Ascending aorta (tissue), 2 donors: ENCODE measurements at regions of chr2 and their contacts with region 1.

Region 1: DNA sequence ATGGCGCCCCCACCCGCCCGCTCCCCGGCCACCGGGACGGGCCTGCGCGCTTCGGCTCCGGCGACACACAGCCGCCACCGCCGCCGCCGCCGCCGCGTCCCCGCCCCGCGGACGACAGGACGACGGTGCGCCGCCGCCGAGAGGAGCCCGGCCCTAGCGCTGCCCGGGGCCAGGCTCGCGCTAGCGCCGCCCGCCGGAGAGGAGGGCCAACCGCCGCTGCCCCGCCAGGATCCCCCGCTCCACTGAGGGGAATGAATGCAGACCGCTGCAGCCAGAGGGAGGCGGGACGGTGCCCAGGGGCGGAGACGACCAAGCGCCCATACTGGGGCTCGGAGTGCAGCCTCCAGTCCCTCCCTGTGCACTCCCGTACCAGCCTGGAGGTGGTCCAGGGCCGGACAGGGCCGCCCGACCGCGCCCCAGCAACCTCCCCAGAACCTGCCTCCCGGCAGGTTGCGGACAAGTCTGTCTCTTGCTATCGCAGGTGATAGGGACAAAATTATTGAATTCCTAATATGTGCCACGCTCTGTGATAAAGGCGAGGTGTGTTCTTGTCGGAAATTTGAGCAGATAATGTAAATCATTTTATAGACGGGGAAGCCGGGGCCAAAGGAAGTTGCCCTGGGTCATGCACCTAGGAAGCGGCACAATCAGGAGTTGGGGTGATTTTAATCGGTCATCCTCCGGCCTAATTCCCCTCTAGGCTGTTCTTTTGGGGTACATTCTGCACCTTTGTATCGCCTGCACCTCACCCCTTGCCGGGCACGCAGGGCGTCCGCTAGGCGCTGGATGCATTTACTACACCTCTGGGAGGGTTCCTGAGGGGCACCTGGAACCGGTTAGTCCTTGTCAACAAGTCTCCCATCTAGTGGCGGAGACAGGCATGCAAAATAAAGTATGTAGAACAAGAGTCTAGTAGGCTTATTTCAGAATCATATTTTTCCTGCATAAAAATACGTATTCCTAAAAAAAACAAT is at the start of gene TEX261:
- DNase-seq: peak; percentile 46 to 95
- H3K4me3 ChIP-seq: peak within 1 kb of the TSS; percentile 84 to 95
- H3K27ac ChIP-seq: peak within 1 kb of the TSS; percentile 84 to 92
- H3K4me1 ChIP-seq: peaks cover 2 to 17% of the 10 kb centered on the region in 2 donors
- H3K27me3 ChIP-seq: no peaks in the 10 kb centered on the region
- CTCF ChIP-seq: peak; percentile 56 to 73 (median 60)
- total RNA-seq, gene TEX261: 133 TPM

Region 2: DNA sequence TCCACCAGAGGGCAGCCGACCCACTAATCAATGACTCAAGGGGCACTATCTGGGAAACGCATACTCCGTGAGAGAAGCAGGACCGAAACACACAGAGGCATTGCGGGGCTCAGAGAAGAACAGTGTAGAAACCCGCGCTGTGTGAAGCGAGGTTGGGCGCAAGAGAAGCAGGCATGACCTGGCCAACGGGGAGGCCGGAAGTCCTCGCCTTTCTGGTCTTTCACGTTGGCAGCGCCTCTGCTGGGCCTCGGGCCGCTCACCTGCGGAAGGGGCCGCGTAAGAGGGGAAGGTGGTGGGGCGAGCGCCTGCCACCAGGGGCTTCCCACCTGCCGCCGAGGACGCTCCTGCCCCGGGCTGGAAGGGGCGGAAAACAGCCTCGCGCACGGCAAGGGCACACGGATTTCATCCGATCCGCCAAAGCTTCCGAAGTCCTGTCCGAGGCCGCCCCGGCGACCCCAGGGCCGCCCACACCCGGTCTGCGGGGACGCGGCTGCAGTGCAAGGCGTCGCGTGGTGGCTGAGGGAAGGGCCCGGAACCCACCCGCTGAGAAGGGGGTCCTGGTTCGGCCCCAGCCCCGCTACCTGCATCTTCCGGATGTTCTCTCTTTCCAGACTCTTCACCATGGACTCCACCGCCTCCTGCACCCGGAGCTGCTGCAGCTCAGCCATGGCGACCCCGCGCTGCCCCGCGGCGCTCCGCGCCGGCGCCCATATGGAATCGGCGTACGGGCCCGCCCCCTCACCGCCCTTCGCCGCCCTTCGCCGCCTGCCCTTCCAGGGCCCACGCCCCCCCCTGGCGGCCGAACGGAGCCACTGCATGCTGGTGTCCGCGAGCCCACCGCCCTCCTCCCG is 693.5 kb before region 1 on chr2 and contains the start of gene FAM136A:
- intact Hi-C with region 1: loop called (anchors 10 kb)
- DNase-seq: peak; percentile 16 to 90
- H3K4me3 ChIP-seq: peak within 1 kb of the TSS; percentile 66 to 84
- H3K27ac ChIP-seq: peak within 1 kb of the TSS; percentile 80
- H3K4me1 ChIP-seq: peaks cover 0 to 5% of the 10 kb centered on the region in 2 donors
- H3K27me3 ChIP-seq: no peaks in the 10 kb centered on the region
- CTCF ChIP-seq: peak; percentile 94 to 99 (median 97)
- total RNA-seq, gene FAM136A: 2.0 TPM

Region 3: DNA sequence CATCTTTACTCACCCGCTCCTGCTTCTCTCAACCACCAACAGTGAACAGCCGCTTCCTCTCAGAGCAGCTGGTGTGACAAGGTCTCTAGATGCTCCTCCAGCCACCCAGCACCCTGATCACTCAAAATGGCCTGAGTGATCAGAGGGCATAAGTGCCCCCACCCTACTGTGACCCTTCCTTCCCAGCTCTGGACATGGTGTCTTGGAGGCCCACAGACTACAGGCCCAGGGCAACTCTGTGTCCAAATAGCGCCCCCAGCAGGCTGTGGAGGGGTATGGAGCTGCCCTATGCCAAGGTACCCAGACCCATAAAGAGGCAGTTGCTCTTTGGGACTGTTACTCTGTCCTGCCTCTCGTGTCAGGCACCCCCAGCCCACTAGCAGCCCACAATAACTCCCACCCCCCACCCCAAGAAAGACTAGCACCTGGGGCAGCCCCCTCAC is 34.7 kb before region 1 on chr2:
- intact Hi-C with region 1: no loop called
- DNase-seq: peak in 1 of 2 donors; percentile 22
- H3K4me3 ChIP-seq: no peak overlapping the region
- H3K27ac ChIP-seq: no peak overlapping the region
- H3K4me1 ChIP-seq: peaks cover 0 to 4% of the 10 kb centered on the region in 2 donors
- H3K27me3 ChIP-seq: no peaks in the 10 kb centered on the region
- CTCF ChIP-seq: no peak

Region 4: DNA sequence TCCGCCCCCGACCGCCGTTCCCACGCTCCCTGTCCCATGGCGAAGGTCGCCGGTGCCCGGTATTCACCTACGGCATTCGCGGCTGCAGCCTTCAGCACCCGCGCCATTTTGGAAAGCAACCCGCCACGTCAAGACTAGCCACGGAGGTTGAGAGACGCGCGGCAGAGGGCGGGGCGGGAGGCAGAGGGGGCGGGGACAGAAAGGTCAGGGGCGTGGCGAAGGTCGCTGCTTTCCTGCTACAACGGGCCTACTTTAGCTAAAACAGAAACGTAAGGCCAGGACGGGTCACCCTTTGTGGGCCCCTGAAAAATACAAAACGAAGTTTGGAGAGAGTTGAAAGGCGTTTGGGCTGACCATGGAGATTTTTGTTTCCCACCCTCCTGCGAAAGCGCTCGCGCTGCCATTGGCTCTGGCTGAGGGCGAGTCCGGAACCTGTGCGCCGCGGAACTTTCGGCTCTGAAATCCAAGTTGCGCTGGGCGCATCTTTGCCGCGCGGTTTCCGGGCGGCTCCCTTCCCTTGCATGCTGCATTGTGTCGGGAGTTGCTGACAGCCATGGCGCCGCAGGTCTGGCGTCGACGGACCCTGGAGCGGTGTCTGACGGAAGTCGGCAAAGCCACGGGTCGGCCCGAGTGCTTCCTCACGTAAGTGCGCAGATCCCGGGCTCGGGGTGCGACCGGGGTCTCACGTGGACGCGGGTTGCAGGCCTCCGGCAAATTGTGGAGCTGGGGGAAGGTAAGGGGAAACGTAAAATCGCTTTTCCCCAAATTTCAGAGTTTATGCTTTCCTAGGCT is 135.3 kb after region 1 on chr2 and contains the starts of genes MCEE and MPHOSPH10:
- intact Hi-C with region 1: loop called (anchors 2 kb)
- DNase-seq: peak; percentile 47 to 94
- H3K4me3 ChIP-seq: peak within 1 kb of the TSS; percentile 66 to 72
- H3K27ac ChIP-seq: peak within 1 kb of the TSS; percentile 84 to 94
- H3K4me1 ChIP-seq: peaks cover 0 to 17% of the 10 kb centered on the region in 2 donors
- H3K27me3 ChIP-seq: no peaks in the 10 kb centered on the region
- CTCF ChIP-seq: no peak
- total RNA-seq, gene MCEE: 2.0 TPM
- total RNA-seq, gene MPHOSPH10: 23.0 TPM